ENCODE measurements at regions of chr10 and their contacts with region 1.

Region 1: DNA sequence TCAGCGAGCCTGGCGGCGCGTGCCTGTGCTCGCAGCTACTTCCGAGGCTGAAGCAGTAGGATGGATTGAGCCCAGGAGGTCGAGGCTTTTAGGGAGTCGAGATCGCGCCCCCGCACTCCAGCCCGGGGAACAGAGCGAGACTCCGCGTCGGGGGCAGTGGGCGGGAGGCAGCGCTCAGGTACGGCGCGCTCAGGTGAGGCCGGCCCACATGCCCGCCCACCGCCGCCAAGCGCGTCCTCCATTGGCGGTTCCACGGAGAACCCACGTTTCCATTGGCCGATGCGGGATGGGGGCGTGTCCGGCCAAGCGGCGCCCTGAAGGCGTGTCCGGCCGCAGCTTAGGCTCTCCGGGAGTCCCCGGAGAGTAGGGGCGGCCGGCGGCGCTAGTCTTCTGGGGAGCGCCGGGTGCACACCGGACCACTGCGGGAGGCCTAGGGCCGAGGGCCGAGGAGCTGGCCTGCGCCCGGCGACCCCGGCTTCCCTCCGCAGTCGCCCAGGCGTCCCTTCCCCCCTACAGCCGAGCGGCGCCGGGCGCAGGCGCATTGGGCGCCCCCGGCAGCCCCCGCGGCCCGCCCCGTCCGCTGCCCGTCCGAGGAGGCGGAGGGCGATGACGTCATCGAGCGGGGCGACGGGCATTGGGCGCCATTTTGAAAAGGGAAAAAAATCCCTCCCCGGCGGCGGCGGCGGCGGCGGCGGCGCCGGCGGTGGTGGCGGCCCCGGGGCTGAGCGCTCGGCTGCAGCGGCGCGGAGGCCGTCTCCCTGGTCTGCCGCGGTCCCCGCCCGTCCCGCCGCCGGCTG is at the start of gene PPP2R2D:
- DNase-seq: peak; percentile 91 to 92
- ATAC-seq: peak; percentile 92 to 93
- H3K4me3 ChIP-seq: peak within 1 kb of the TSS; percentile 78 to 97 (median 84)
- H3K27ac ChIP-seq: peak within 1 kb of the TSS; percentile 86 to 96 (median 89)
- H3K4me1 ChIP-seq: peaks cover 36 to 42% of the 10 kb centered on the region in 2 donors
- H3K27me3 ChIP-seq: peaks cover 3 to 13% (median 6%) of the 10 kb centered on the region in 3 donors
- CTCF ChIP-seq: no peak
- POLR2A ChIP-seq: peak; percentile 68 to 77
- total RNA-seq, gene PPP2R2D: 22.4 to 33.7 (median 29.1) TPM

Region 2: DNA sequence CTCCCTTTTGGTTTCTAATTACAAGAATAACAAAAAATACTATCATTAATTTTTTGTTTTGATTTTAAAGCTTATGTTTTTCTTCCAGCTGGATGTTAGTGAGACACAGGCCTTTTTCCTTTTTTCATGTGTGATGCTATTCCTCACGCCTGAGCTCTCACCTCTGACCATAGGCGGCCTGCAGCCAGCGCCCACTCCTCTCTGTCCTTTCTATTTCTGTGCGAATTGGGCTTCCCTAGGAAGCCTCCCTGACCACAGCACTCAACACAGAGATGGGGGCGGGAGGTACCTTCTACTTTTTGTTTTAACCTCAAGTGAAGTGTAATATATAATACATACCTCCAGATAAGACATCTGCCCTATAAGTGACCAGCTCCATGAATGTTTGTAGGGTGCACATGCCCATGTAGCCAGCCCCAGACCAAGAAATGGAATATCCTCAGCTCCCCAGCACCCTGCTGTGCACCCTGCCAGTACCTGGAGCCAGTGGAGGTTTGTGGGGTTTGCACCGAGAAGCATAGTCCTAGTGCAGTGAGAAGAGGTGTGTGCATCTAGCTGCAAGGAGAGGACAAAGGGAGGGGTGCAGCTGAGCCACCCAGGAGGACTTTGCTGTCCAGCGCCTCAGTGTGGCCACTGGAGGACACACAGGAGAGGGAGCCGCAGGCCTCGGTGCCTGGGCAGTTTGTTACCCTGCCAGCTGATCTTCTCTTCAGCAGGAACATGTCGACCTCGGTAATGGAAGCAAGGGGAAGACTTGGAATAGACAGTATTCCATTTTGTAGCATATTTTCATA is 42.7 kb after region 1 on chr10:
- in situ Hi-C with region 1: no loop called
- intact Hi-C with region 1: loop called (anchors 2 kb)
- DNase-seq: no peak
- ATAC-seq: no peak
- H3K4me3 ChIP-seq: no peak overlapping the region
- H3K27ac ChIP-seq: no peak overlapping the region
- H3K4me1 ChIP-seq: peaks cover under 1% of the 10 kb centered on the region in 2 donors
- H3K27me3 ChIP-seq: no peaks in the 10 kb centered on the region
- CTCF ChIP-seq: peak in 4 of 5 experiments; percentile 17 to 39 (median 32)
- POLR2A ChIP-seq: no peak

Region 3: GRCh38 chr10:131981429-131982184 is 81.1 kb after region 1 on chr10 and contains the start of gene BNIP3:
- in situ Hi-C with region 1: no loop called
- intact Hi-C with region 1: loop called (anchors 1 kb)
- DNase-seq: peak; percentile 94
- ATAC-seq: peak; percentile 74 to 84
- H3K4me3 ChIP-seq: peak within 1 kb of the TSS; percentile 81 to 99 (median 91)
- H3K27ac ChIP-seq: peak within 1 kb of the TSS; percentile 93 to 99 (median 95)
- H3K4me1 ChIP-seq: peaks cover 24 to 30% of the 10 kb centered on the region in 2 donors
- H3K27me3 ChIP-seq: no peaks in the 10 kb centered on the region
- CTCF ChIP-seq: peak in 2 of 5 experiments; percentile 2 to 21
- POLR2A ChIP-seq: peak; percentile 98 to 99
- total RNA-seq, gene BNIP3: 337 to 1,280 (median 583) TPM

Region 4: DNA sequence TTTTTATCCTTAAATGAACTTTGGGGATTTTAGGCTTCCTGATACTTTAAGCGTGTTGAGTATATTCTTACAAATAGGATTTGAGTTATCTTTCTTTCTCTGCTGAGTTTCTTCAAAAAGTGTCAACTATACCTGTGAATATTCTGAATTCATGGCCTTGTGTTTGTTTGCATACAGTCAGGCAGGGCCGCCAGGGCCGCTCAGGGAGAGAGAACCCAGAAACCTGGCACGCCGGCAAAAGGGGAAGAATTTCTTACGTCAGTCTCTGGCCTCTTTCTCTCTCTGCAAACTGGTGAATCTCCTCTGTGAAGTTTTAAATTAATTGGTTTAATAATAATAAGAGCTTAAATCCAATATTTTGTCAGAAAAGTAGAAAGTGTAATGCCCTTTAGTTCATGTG is 110.5 kb after region 1 on chr10:
- in situ Hi-C with region 1: no loop called
- intact Hi-C with region 1: loop called (anchors 2 kb)
- DNase-seq: peak in 1 of 2 donors; percentile 51
- ATAC-seq: peak in 1 of 2 donors; percentile 22
- H3K4me3 ChIP-seq: no peak overlapping the region
- H3K27ac ChIP-seq: peak overlapping the region in 2 of 4 donors; percentile 51 to 60
- H3K4me1 ChIP-seq: peaks cover 16 to 35% of the 10 kb centered on the region in 2 donors
- H3K27me3 ChIP-seq: no peaks in the 10 kb centered on the region
- CTCF ChIP-seq: no peak
- POLR2A ChIP-seq: no peak

Measured in gastrocnemius medialis (tissue), 4 donors.